Breast epithelium (tissue), 4 donors: ENCODE measurements at regions of chr15 and their contacts with region 1.

Region 1: GRCh38 chr15:95302206-95302605 is 1028.3 kb upstream of the NR2F2 start:
- DNase-seq: no peak
- H3K4me3 ChIP-seq: no peak overlapping the region
- H3K27ac ChIP-seq: no peak overlapping the region
- H3K4me1 ChIP-seq: no peaks in the 10 kb centered on the region
- H3K27me3 ChIP-seq: no peaks in the 10 kb centered on the region
- CTCF ChIP-seq: no peak
- POLR2A ChIP-seq: no peak

Region 2: GRCh38 chr15:95341686-95342085 is 39.5 kb after region 1 on chr15:
- intact Hi-C with region 1: loop called (anchors 2 kb)
- DNase-seq: no peak
- H3K4me3 ChIP-seq: no peak overlapping the region
- H3K27ac ChIP-seq: no peak overlapping the region
- H3K4me1 ChIP-seq: no peaks in the 10 kb centered on the region
- H3K27me3 ChIP-seq: no peaks in the 10 kb centered on the region
- CTCF ChIP-seq: no peak
- POLR2A ChIP-seq: no peak